ENCODE measurements at regions of chr2 and their contacts with region 1.

Region 1: GRCh38 chr2:6043238-6043637 is 351.1 kb downstream of the SOX11 start:
- DNase-seq: no peak
- H3K4me3 ChIP-seq: no peak overlapping the region
- H3K4me3 Mint-ChIP-seq: no peak overlapping the region
- H3K27ac Mint-ChIP-seq: no peak overlapping the region
- H3K4me1 ChIP-seq: no peaks in the 10 kb centered on the region
- H3K4me1 Mint-ChIP-seq: peaks cover 8% of the 10 kb centered on the region
- H3K27me3 ChIP-seq: no peaks in the 10 kb centered on the region
- H3K27me3 Mint-ChIP-seq: no peaks in the 10 kb centered on the region
- CTCF ChIP-seq: no peak

Region 2: GRCh38 chr2:5937851-5938565 is 105.2 kb before region 1 on chr2:
- CTCF ChIA-PET with region 1: no interaction called
- POLR2A ChIA-PET with region 1: no interaction called
- intact Hi-C with region 1: loop called (anchors 1 kb)
- DNase-seq: no peak
- H3K4me3 ChIP-seq: no peak overlapping the region
- H3K4me3 Mint-ChIP-seq: peak overlapping the region; percentile 60
- H3K27ac Mint-ChIP-seq: peak overlapping the region; percentile 51
- H3K4me1 ChIP-seq: peaks cover 3% of the 10 kb centered on the region; the same call in 1 of the 2 replicates
- H3K4me1 Mint-ChIP-seq: peaks cover 16% of the 10 kb centered on the region
- H3K27me3 ChIP-seq: no peaks in the 10 kb centered on the region
- H3K27me3 Mint-ChIP-seq: no peaks in the 10 kb centered on the region
- CTCF ChIP-seq: no peak

Region 3: GRCh38 chr2:6054161-6054671 is 11.0 kb after region 1 on chr2:
- CTCF ChIA-PET with region 1: interaction called, 3 read pairs
- POLR2A ChIA-PET with region 1: no interaction called
- intact Hi-C with region 1: loop called (anchors 1 kb)
- DNase-seq: no peak
- H3K4me3 ChIP-seq: no peak overlapping the region
- H3K4me3 Mint-ChIP-seq: no peak overlapping the region
- H3K27ac Mint-ChIP-seq: no peak overlapping the region
- H3K4me1 ChIP-seq: no peaks in the 10 kb centered on the region
- H3K4me1 Mint-ChIP-seq: peaks cover 5% of the 10 kb centered on the region
- H3K27me3 ChIP-seq: no peaks in the 10 kb centered on the region
- H3K27me3 Mint-ChIP-seq: no peaks in the 10 kb centered on the region
- CTCF ChIP-seq: no peak

Region 4: DNA sequence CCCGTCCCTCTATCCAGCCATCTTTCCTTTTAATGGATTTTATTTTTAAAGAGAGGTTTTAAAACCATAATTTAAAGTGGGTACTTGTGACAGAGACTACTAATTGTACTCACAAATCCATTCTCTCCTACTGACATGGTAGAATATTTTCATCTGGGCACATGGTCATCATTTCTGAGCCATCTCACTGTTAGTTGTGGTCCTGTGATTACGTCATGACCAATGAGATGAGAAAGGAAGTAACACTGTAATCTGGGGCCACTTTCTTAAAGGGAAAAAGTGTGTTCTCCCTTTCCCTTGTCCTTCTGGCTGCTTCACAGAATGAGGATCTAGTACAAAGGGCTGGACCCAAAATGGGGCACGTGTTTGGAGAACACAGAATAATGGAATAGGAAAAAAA is 283.7 kb after region 1 on chr2:
- CTCF ChIA-PET with region 1: interaction called, 15 read pairs
- POLR2A ChIA-PET with region 1: no interaction called
- intact Hi-C with region 1: no loop called
- DNase-seq: no peak
- H3K4me3 ChIP-seq: no peak overlapping the region
- H3K4me3 Mint-ChIP-seq: no peak overlapping the region
- H3K27ac Mint-ChIP-seq: no peak overlapping the region
- H3K4me1 ChIP-seq: no peaks in the 10 kb centered on the region
- H3K4me1 Mint-ChIP-seq: no peaks in the 10 kb centered on the region
- H3K27me3 ChIP-seq: no peaks in the 10 kb centered on the region
- H3K27me3 Mint-ChIP-seq: no peaks in the 10 kb centered on the region
- CTCF ChIP-seq: no peak

Measured in Caco-2 (cell line).